Dendritic cell treated with granulocyte-macrophage colony-stimulating factor and Interleukin-4, amounts not matched to agents 40 ng/mL and 50 ng/mL, for 4 days (primary cell): ENCODE measurements at regions of chr19 and their contacts with region 1.

Region 1: DNA sequence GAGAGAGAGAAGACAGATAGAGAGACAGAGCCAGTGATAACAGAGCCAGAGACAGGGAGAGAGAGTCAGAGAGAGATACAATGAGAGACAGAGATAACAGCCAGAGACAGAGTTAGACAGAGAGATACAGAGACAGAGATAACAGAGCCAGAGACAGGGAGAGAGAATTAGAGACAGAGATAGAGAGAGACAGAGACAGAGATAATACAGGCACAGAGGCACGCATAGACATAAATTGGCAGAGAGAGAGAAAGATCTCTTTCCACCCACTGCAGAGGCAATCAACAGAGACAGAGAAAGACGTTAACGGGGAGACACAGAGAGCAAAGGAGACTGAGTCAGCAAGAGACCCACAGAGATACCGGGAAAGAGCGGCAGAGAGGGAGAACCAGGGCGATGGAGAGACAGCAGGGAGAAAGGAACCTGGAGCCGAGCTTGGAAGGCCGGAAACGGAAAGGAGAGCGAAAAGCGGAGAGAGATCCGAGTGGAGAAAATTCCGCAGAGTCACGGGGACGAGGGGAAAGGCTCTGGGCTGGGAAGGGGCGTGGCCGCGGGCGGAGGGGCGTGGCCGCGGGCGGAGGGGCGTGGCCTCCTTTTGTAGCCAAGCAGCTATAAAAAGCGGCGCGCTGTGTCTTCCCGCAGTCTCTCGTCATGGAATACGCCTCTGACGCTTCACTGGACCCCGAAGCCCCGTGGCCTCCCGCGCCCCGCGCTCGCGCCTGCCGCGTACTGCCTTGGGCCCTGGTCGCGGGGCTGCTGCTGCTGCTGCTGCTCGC is at the start of gene TNFSF9:
- H3K4me3 Mint-ChIP-seq: peak within 1 kb of the TSS; percentile 86
- H3K27ac Mint-ChIP-seq: peak within 1 kb of the TSS; percentile 84
- H3K4me1 Mint-ChIP-seq: peaks cover 49% of the 10 kb centered on the region
- H3K27me3 Mint-ChIP-seq: peaks cover 34% of the 10 kb centered on the region

Region 2: DNA sequence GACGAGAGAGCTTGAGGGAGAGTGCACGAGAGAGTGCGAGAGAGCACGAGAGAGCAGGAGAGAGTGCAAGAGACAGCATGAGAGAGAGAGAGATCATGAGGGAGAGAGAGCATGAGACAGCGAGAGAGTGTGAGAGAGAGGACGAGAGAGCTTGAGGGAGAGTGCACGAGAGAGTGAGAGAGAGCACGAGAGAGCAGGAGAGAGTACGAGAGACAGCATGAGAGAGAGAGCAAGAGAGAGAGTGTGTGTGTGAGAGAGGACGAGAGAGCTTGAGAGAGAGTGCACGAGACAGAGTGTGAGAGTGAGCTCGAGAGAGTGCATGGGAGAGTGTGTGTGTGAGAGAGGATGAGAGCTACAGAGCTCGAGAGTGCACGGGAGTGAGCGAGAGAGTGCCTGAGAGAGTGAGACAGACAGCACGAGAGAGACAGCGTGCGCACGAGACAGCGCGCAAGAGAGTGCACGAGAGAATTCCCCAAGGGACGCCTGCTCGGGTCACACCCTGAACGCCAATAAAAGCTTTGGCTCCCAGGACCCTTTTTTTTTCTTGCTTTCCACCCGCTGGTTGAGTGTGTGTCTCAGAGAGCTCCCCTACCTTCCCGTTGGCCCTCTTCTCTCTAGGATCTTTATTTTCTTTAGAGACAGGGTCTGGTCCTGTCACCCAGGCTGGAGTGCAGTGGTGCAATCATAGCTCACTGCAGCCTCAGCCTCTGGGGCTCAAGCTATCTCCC is 56.7 kb after region 1 on chr19:
- intact Hi-C with region 1: loop called (anchors 10 kb)
- H3K4me3 Mint-ChIP-seq: peak overlapping the region; percentile 7
- H3K27ac Mint-ChIP-seq: no peak overlapping the region
- H3K4me1 Mint-ChIP-seq: peaks cover 61% of the 10 kb centered on the region
- H3K27me3 Mint-ChIP-seq: peaks cover 74% of the 10 kb centered on the region